ENCODE measurements at regions of chr7 and their contacts with region 1.

Region 1: DNA sequence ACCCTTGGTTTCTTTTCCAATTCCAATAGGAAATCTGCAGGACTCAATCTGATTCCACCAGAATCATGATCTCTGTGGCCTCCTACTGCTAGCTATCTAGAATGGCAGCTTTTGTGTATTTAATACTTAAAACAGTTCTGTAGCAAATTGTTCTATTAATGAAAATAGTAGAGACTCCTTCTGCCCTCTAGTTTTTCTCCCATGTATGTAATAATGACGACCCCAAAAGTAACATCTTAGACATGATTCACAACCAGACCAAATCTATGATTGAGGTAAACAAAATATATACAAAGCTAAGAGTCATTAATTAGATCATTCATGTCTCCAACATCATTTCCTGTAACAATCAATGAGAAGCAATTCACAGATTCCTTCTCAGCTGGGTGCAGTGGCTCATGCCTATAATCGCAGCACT is 259.1 kb upstream of the MKLN1 start:
- DNase-seq: no peak
- ATAC-seq: no peak
- H3K4me3 Mint-ChIP-seq: no peak overlapping the region
- H3K27ac Mint-ChIP-seq: no peak overlapping the region
- H3K4me1 Mint-ChIP-seq: peaks cover 20% of the 10 kb centered on the region
- H3K27me3 Mint-ChIP-seq: no peaks in the 10 kb centered on the region

Region 2: DNA sequence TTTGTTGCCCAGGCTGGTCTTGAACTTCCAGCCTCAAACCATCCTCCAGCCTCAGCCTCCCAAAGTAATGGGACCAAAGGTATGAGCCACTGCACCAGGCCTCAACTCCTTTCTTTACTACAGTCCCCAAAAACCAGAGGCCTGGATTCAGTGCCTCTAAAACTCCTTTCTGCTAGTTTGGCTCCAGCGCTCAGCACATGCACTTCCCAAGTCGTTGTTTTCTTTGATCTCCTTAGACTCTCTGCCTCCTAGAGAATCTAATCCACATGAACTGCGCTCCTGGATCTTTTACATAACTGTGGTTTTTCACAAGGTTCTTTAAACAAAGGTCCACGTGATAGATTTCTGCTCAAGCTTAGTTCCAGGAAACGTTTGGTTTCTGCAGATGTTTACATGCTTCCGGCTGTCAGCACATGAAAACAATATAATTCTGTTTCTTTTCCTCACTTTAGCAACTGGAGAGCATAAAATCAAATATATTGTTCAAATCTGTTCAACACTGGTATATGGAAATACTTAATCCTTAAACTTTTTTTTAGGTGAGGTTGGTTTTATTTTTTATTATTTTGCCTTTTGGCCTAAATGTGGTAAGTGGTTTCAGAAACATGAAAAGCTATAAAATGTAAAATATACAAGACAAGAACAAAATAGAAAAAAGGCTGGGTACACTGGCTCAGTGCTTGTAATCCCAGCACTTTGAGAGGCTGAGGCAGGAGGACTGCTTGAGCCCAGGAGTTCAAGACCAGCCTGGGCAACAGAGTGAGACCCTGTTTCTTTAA is 11.4 kb before region 1 on chr7:
- CTCF ChIA-PET with region 1: interaction called, 52 read pairs
- POLR2A ChIA-PET with region 1: interaction called, 6 read pairs
- DNase-seq: peak; percentile 62
- ATAC-seq: peak; percentile 66
- H3K4me3 Mint-ChIP-seq: peak overlapping the region; percentile 70
- H3K27ac Mint-ChIP-seq: peak overlapping the region; percentile 95
- H3K4me1 Mint-ChIP-seq: peaks cover 57% of the 10 kb centered on the region
- H3K27me3 Mint-ChIP-seq: no peaks in the 10 kb centered on the region

Region 3: GRCh38 chr7:131424219-131424822 is 355.7 kb after region 1 on chr7:
- CTCF ChIA-PET with region 1: interaction called, 13 read pairs
- POLR2A ChIA-PET with region 1: no interaction called
- DNase-seq: peak; percentile 28
- ATAC-seq: peak; percentile 69
- H3K4me3 Mint-ChIP-seq: no peak overlapping the region
- H3K27ac Mint-ChIP-seq: no peak overlapping the region
- H3K4me1 Mint-ChIP-seq: no peaks in the 10 kb centered on the region
- H3K27me3 Mint-ChIP-seq: no peaks in the 10 kb centered on the region

Region 4: GRCh38 chr7:131625817-131626372 is 557.3 kb after region 1 on chr7:
- CTCF ChIA-PET with region 1: no interaction called
- POLR2A ChIA-PET with region 1: no interaction called
- DNase-seq: no peak
- ATAC-seq: no peak
- H3K4me3 Mint-ChIP-seq: no peak overlapping the region
- H3K27ac Mint-ChIP-seq: no peak overlapping the region
- H3K4me1 Mint-ChIP-seq: no peaks in the 10 kb centered on the region
- H3K27me3 Mint-ChIP-seq: peaks cover 6% of the 10 kb centered on the region